Cardiac septum (tissue), 1 donor: ENCODE measurements at regions of chr1 and their contacts with region 1.

Region 1: DNA sequence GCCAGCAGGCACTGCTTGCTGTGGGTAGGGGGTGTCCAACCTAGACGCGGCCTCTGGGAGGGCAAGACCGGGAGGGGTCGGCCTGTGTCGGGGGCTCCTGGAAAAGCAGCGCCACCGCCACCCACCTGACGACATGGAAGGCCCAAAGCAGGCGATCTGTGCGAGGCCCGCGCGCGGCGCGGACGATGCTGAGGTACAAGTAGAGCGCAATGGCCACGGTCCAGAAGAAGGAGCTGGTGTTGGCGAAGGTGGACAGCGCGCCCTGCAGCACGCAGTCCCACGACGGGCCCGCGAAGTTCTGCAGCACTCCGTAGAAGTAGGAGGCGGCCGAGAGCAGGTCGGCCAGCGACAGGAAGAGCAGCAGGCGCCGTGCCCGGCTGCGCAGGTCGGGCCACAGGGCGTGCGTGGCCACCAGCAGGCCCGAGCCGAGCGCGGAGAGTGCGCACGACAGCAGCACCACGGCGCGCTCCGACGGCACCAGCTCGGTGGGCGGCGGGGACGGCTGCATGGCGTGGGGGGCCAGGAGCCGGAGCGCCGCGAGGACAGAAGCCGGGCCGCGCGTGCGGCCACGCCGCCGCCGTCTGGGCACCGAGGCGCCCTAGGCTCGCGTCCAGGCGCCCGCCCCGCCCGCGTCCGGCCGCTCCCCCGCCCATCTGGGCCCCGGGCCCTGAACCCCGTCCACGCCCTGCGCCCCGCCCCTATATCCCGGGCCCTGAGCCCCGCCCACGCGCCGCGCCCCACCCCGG is at the start of gene GPR157:
- DNase-seq: peak; percentile 97
- total RNA-seq, gene GPR157: 23.0 TPM

Region 2: GRCh38 chr1:8780405-8780804 is 348.3 kb before region 1 on chr1:
- intact Hi-C with region 1: no loop called
- DNase-seq: no peak

Region 3: GRCh38 chr1:9196129-9197040 is 67.7 kb after region 1 on chr1:
- intact Hi-C with region 1: no loop called
- DNase-seq: peak; percentile 87

Region 4: DNA sequence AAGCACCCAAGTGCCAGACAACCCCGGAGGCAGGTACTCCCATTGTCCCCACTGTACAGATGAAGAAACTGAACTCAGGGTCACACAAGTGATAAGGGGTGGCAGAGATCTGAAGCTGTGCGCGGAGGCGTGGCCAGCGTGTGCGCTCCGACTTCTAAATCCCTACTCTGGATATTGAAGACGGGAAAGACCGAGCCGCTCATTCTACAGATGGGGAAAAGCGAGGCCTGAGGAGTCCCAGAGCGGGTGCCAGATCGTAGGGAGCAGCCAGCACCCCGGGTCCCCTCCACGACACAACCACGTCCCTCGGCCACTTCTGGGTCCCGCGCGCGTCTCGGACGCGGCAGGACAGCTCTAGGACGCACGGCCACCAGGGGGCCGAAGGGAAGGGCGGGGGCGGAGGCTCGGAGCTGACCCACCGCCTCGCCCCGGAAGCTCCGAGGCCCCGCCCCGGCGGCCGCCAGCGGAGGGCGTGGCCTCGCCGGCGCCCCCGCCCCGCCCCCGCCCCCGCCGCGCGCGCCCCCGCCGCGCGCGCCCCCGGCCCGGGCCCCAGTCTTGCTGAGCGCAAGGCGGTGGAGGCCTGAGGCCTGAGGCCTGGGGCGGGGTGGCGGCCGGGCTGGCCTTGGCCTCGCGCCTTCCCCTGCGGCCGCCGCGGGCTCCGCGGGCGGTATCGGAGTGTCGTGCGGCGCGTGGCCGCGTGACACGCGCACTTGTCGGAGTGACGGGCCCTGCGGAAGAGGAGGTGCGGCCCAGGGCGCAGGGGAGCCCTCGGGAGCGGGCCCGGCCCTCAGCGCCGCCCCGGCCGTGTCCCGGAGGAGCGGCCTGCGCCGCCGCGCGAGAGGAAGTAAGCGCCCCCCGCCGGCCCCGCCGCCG is 105.8 kb after region 1 on chr1 and contains the start of gene H6PD:
- intact Hi-C with region 1: loop called (anchors 5 kb)
- DNase-seq: peak; percentile 93
- total RNA-seq, gene H6PD: 28.9 TPM